B cell (primary cell): ENCODE measurements at regions of chr9 and their contacts with region 1.

Region 1: GRCh38 chr9:105712773-105713172 is 18.4 kb downstream of the TMEM38B start:
- DNase-seq: no peak
- ATAC-seq: no peak
- H3K4me3 ChIP-seq: no peak overlapping the region
- H3K4me3 Mint-ChIP-seq: no peak overlapping the region
- H3K27ac ChIP-seq: no peak overlapping the region
- H3K27ac Mint-ChIP-seq: no peak overlapping the region
- H3K4me1 ChIP-seq: peaks cover 0 to 6% of the 10 kb centered on the region in 2 donors
- H3K4me1 Mint-ChIP-seq: peaks cover 6% of the 10 kb centered on the region
- H3K27me3 ChIP-seq: no peaks in the 10 kb centered on the region
- H3K27me3 Mint-ChIP-seq: no peaks in the 10 kb centered on the region
- CTCF ChIP-seq: no peak

Region 2: GRCh38 chr9:105608721-105609598 is 103.8 kb before region 1 on chr9:
- CTCF ChIA-PET with region 1: interaction called, 49 read pairs
- POLR2A ChIA-PET with region 1: no interaction called
- intact Hi-C with region 1: no loop called
- DNase-seq: peak; percentile 69
- ATAC-seq: peak; percentile 60
- H3K4me3 ChIP-seq: no peak overlapping the region
- H3K4me3 Mint-ChIP-seq: no peak overlapping the region
- H3K27ac ChIP-seq: no peak overlapping the region
- H3K27ac Mint-ChIP-seq: peak overlapping the region; percentile 50
- H3K4me1 ChIP-seq: no peaks in the 10 kb centered on the region
- H3K4me1 Mint-ChIP-seq: peaks cover 3% of the 10 kb centered on the region
- H3K27me3 ChIP-seq: no peaks in the 10 kb centered on the region
- H3K27me3 Mint-ChIP-seq: no peaks in the 10 kb centered on the region
- CTCF ChIP-seq: peak; percentile 86

Region 3: GRCh38 chr9:105637787-105638395 is 74.9 kb before region 1 on chr9:
- CTCF ChIA-PET with region 1: interaction called, 59 read pairs
- POLR2A ChIA-PET with region 1: no interaction called
- intact Hi-C with region 1: no loop called
- DNase-seq: peak; percentile 12
- ATAC-seq: no peak
- H3K4me3 ChIP-seq: no peak overlapping the region
- H3K4me3 Mint-ChIP-seq: no peak overlapping the region
- H3K27ac ChIP-seq: no peak overlapping the region
- H3K27ac Mint-ChIP-seq: no peak overlapping the region
- H3K4me1 ChIP-seq: no peaks in the 10 kb centered on the region
- H3K4me1 Mint-ChIP-seq: no peaks in the 10 kb centered on the region
- H3K27me3 ChIP-seq: no peaks in the 10 kb centered on the region
- H3K27me3 Mint-ChIP-seq: no peaks in the 10 kb centered on the region
- CTCF ChIP-seq: peak; percentile 68

Region 4: DNA sequence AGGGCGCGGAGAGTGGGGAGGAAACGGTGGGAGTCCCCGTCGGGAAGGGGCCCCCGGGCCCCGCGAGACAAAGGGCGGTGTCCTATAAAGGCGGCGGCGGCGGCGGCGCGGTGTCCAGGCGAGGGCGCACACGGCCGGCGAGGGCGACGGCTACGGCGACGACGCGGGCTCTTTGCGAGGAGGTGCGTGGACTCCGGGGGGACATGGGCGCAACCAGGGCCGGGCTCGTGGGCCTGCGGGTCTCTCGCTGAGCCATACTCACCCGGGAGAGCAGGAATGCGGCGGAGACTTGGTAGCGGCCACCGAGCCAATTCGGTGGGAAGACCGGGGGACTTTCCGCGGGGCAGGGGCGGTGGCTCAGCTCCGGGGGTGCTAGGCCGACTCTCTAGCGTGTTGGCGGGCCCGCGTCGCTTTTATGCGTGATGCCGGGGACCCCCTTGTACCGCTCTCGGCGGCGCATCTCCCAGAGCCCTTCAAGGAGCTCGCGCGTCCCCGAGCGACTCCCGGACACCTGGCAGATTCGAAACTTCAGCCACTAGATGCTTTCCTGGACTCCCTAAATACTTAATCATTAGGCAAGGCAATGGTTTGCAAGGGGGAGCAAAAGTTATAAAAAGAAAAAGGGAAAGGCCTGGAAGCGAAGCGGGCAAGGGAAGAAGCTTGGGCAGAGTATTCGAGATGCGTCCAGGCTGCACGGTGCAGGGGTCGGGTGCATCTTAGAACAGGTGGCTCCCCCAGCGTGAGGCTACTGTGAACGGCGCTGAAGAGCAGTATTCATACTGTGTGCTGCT is 56.4 kb before region 1 on chr9:
- CTCF ChIA-PET with region 1: interaction called, 51 read pairs
- POLR2A ChIA-PET with region 1: no interaction called
- intact Hi-C with region 1: no loop called
- DNase-seq: peak; percentile 52
- ATAC-seq: peak; percentile 80
- H3K4me3 ChIP-seq: peak overlapping the region; percentile 53 to 69 (median 63)
- H3K4me3 Mint-ChIP-seq: peak overlapping the region; percentile 91
- H3K27ac ChIP-seq: no peak overlapping the region
- H3K27ac Mint-ChIP-seq: peak overlapping the region; percentile 57
- H3K4me1 ChIP-seq: peaks cover 20 to 24% of the 10 kb centered on the region in 2 donors
- H3K4me1 Mint-ChIP-seq: peaks cover 24% of the 10 kb centered on the region
- H3K27me3 ChIP-seq: peaks cover 0 to 32% (median 20%) of the 10 kb centered on the region in 4 experiments
- H3K27me3 Mint-ChIP-seq: peaks cover 24% of the 10 kb centered on the region
- CTCF ChIP-seq: peak; percentile 35

Region 5: GRCh38 chr9:105667867-105668266 is 44.9 kb before region 1 on chr9:
- CTCF ChIA-PET with region 1: interaction called, 12 read pairs
- POLR2A ChIA-PET with region 1: no interaction called
- intact Hi-C with region 1: no loop called
- DNase-seq: no peak
- ATAC-seq: no peak
- H3K4me3 ChIP-seq: no peak overlapping the region
- H3K4me3 Mint-ChIP-seq: no peak overlapping the region
- H3K27ac ChIP-seq: no peak overlapping the region
- H3K27ac Mint-ChIP-seq: no peak overlapping the region
- H3K4me1 ChIP-seq: peaks cover 5 to 6% of the 10 kb centered on the region in 2 donors
- H3K4me1 Mint-ChIP-seq: peaks cover 9% of the 10 kb centered on the region
- H3K27me3 ChIP-seq: no peaks in the 10 kb centered on the region
- H3K27me3 Mint-ChIP-seq: no peaks in the 10 kb centered on the region
- CTCF ChIP-seq: no peak

Region 6: DNA sequence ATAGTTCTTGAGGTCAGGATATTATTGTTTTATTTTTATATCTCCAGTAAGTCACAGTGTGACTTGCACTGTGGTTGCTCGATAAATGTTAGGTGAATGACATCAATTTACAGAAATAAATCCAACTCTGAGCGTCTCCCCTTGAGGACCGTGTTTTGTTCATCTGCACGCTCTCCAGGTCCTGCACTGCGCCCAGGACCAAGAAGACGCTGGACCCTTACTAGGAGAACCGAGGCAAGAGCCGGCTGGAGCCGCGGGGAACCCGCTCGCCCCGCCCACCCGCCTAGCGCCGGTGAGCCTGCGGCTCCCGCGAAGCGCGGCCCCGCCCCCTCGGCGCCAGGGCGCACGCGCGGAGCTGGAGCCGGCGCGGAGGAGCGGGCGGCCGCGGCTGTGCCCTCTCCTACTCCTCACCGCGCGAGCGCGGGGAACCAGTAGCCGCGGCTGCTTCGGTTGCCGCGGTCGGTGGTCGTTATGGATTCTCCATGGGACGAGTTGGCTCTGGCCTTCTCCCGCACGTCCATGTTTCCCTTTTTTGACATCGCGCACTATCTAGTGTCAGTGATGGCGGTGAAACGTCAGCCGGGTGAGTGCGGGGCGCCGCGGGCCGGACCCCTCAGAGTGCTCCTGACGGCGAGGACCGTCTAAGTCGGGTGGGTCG is 18.5 kb before region 1 on chr9 and contains the start of gene TMEM38B:
- CTCF ChIA-PET with region 1: interaction called, 20 read pairs
- POLR2A ChIA-PET with region 1: no interaction called
- intact Hi-C with region 1: no loop called
- DNase-seq: peak; percentile 90
- ATAC-seq: peak; percentile 83
- H3K4me3 ChIP-seq: peak within 1 kb of the TSS; percentile 75 to 93 (median 82)
- H3K4me3 Mint-ChIP-seq: peak within 1 kb of the TSS; percentile 95
- H3K27ac ChIP-seq: peak within 1 kb of the TSS; percentile 58 to 77
- H3K27ac Mint-ChIP-seq: peak within 1 kb of the TSS; percentile 92
- H3K4me1 ChIP-seq: peaks cover 17 to 18% of the 10 kb centered on the region in 2 donors
- H3K4me1 Mint-ChIP-seq: peaks cover 19% of the 10 kb centered on the region
- H3K27me3 ChIP-seq: peaks cover 0 to 14% (median 11%) of the 10 kb centered on the region in 4 experiments
- H3K27me3 Mint-ChIP-seq: peaks cover 26% of the 10 kb centered on the region
- CTCF ChIP-seq: no peak
- total RNA-seq, gene TMEM38B: 29.6 and 35.2 TPM in 2 replicates

Region 7: DNA sequence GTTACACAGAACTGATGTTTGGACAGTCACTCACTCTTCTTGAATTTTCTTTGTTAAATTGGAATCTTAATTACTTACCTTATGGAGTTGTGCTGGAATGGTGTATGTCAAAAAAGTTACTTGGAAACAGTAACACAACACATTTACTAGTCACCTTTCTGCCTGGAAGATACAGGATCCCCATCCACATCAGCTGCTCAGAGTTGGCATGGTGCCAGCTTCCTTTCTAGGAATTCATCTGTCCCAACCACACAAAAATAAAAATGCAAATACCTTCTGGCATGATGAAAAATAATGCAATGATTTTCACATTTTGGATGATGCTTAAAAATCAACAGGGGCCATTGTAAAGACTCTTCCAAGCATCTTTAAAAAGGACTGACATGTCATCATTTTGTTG is 323.0 kb after region 1 on chr9:
- CTCF ChIA-PET with region 1: no interaction called
- POLR2A ChIA-PET with region 1: no interaction called
- intact Hi-C with region 1: no loop called
- DNase-seq: no peak
- ATAC-seq: no peak
- H3K4me3 ChIP-seq: no peak overlapping the region
- H3K4me3 Mint-ChIP-seq: no peak overlapping the region
- H3K27ac ChIP-seq: no peak overlapping the region
- H3K27ac Mint-ChIP-seq: no peak overlapping the region
- H3K4me1 ChIP-seq: no peaks in the 10 kb centered on the region
- H3K4me1 Mint-ChIP-seq: no peaks in the 10 kb centered on the region
- H3K27me3 ChIP-seq: no peaks in the 10 kb centered on the region
- H3K27me3 Mint-ChIP-seq: no peaks in the 10 kb centered on the region
- CTCF ChIP-seq: no peak